Activated CD8-positive, alpha-beta memory T cell treated with anti-CD3 and anti-CD28 coated beads, Interleukin-2, amount 10 ng/mL, durations not matched to agents 7 days and 5 days (primary cell): ENCODE measurements at regions of chr9 and their contacts with region 1.

Region 1: DNA sequence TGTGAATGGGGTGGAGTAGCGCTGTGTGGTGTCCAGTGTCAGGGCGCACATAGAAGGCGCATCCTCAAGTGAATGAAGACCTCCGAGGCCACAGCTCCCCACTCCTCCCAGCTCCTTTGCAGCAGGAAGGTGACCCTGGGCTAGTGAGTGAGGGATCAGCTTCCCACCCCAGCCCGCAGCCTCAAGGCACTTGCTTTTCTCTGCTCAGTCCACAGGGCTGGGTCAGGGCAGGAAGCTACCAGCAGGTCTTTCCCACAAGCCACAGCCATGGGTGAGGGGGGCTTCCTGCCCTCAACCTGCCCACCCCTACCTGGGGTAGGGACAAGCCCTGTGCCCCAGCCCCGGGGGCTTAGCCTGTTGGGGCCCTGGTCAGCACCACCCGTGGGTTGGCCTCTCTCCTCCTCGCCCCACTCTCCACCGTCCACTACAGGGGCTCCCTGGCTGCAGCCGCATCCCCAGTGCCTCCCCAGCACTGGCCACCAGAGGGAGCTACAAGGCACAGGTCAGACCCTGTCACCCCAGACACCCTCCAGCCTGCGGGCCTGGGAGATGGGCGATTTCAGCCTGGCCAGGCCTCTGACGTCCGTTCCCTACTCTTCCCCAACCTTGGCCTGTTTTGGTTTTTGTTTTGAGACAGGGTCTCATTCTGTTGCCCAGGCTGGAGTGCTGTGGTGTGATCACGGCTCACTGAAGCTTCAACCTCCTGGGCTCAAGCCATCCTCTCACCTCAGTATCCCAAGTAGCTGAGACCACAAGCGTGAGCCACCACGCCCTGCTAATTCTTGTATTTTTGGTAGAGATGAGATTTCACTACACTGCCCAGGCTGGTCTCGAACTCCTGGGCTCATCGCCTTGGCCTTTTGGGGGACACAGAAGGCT is 1.3 kb upstream of the ABCA2 start:
- DNase-seq: peak; percentile 85
- ATAC-seq: peak; percentile 53
- H3K4me3 Mint-ChIP-seq: peak overlapping the region; percentile 65
- H3K27ac Mint-ChIP-seq: peak overlapping the region; percentile 90
- H3K4me1 Mint-ChIP-seq: peaks cover 55% of the 10 kb centered on the region
- H3K27me3 Mint-ChIP-seq: peaks cover 3% of the 10 kb centered on the region

Region 2: GRCh38 chr9:136790927-136791641 is 238.2 kb before region 1 on chr9 and contains the start of gene TMEM141:
- CTCF ChIA-PET with region 1: interaction called, 32 read pairs
- DNase-seq: peak; percentile 100
- ATAC-seq: peak; percentile 93
- H3K4me3 Mint-ChIP-seq: peak within 1 kb of the TSS; percentile 77
- H3K27ac Mint-ChIP-seq: peak within 1 kb of the TSS; percentile 86
- H3K4me1 Mint-ChIP-seq: peaks cover 30% of the 10 kb centered on the region
- H3K27me3 Mint-ChIP-seq: peaks cover 9% of the 10 kb centered on the region
- total RNA-seq, gene TMEM141: 31.7 to 32.8 TPM

Region 3: DNA sequence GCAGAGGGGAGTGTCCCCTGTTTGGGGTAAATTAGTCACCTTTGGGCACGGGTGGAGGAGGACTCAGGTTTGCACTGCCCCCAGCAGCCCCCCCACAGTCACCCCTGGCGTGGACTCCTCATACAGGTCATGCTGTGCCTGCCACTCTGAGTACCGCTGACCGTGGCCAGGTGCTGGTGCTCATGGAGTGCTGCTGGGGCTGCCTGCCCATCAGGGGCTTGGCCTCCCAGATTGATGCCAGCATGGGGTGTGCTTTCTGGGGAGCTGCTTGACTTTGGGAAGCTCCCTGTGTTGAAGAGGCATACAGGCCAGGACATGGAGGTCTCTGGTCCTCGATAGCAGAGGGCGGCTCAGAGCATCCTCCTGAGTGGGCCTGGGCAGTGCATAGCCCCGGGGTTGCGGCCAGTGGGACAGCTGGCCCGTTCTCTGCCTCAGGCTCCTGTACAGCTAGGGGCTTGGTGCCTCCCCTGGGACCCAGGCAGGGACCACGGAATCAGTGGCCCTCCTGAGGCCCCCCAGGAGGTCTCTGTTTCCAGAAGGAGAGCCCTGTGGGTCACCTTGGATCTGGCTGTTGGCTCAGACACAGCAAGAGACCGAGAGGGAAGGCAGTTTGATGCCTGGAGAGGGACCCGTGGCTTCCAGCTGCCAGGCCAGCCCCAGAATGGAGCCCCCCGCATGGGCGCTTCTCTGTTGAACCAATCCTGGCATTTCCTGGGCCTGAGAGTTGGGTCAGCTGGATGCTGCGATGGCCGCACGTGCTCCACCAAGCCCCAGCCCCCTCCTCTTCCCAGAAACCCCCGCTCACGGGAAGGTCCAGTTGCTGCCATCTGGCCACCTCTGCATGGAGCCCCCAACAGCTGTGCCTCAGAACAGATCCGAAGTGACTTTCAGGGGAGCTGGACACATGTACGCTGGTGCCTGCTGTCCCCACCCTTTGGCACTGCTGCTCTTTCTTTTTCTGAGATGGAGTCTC is 193.1 kb before region 1 on chr9:
- CTCF ChIA-PET with region 1: no interaction called
- DNase-seq: no peak
- ATAC-seq: no peak
- H3K4me3 Mint-ChIP-seq: no peak overlapping the region
- H3K27ac Mint-ChIP-seq: no peak overlapping the region
- H3K4me1 Mint-ChIP-seq: no peaks in the 10 kb centered on the region
- H3K27me3 Mint-ChIP-seq: no peaks in the 10 kb centered on the region

Region 4: GRCh38 chr9:136944519-136945279 is 84.6 kb before region 1 on chr9 and contains the starts of genes C8G and FBXW5:
- CTCF ChIA-PET with region 1: interaction called, 183 read pairs
- DNase-seq: peak; percentile 96
- ATAC-seq: peak; percentile 81
- H3K4me3 Mint-ChIP-seq: peak within 1 kb of the TSS; percentile 79
- H3K27ac Mint-ChIP-seq: peak within 1 kb of the TSS; percentile 81
- H3K4me1 Mint-ChIP-seq: peaks cover 18% of the 10 kb centered on the region
- H3K27me3 Mint-ChIP-seq: no peaks in the 10 kb centered on the region
- total RNA-seq, gene C8G: 1.7 TPM in 1 of 2 experiments, not detected in the other
- total RNA-seq, gene FBXW5: 106 to 107 TPM

Region 5: DNA sequence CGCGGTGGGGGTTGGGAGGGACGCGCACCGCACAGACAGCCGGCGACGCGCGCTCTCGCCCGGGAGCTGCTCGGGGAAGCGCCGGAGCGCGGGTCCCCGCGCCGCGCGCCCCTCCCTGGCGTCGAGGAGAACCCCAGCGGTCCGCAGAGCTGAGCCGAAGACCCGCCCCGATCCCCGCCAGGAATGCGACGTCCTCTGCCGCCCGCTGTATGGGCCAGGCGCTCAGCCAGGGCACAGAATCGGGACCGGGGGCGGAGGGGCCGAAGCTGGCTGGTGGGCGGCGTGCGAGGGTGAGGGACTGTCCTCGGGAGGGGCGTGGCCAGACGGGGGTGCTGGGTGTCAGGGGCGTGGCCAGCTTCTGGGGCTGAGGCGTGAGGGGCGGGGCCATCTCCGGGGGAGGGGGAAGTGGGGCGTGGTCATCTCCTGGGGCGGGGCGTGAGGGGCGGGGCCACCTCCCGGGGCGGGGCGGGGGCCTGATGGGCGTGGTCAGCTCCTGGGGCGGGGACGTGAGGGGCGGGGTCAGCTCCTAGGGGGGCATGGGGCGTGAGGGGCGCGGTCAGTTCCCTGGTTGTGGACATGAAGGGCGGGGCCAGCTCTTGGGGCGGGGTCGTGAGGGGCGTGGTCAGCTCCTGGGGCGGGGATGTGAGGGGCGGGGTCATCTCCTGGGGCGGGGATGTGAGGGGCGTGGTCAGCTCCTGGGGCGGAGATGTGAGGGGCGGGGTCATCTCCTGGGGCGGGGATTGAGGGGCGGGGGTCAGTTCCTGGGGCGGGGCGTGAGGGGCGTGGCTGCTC is 51.0 kb before region 1 on chr9:
- CTCF ChIA-PET with region 1: interaction called, 30 read pairs
- DNase-seq: peak; percentile 83
- ATAC-seq: peak; percentile 63
- H3K4me3 Mint-ChIP-seq: no peak overlapping the region
- H3K27ac Mint-ChIP-seq: no peak overlapping the region
- H3K4me1 Mint-ChIP-seq: peaks cover 15% of the 10 kb centered on the region
- H3K27me3 Mint-ChIP-seq: peaks cover 5% of the 10 kb centered on the region

Region 6: GRCh38 chr9:137046098-137046787 is 16.9 kb after region 1 on chr9 and contains the start of gene NPDC1:
- CTCF ChIA-PET with region 1: interaction called, 48 read pairs
- DNase-seq: peak; percentile 89
- ATAC-seq: peak; percentile 82
- H3K4me3 Mint-ChIP-seq: peak within 1 kb of the TSS; percentile 71
- H3K27ac Mint-ChIP-seq: no peak within 1 kb of the TSS
- H3K4me1 Mint-ChIP-seq: peaks cover 16% of the 10 kb centered on the region
- H3K27me3 Mint-ChIP-seq: peaks cover 43% of the 10 kb centered on the region
- total RNA-seq, gene NPDC1: 30.4 to 55.6 TPM

Region 7: DNA sequence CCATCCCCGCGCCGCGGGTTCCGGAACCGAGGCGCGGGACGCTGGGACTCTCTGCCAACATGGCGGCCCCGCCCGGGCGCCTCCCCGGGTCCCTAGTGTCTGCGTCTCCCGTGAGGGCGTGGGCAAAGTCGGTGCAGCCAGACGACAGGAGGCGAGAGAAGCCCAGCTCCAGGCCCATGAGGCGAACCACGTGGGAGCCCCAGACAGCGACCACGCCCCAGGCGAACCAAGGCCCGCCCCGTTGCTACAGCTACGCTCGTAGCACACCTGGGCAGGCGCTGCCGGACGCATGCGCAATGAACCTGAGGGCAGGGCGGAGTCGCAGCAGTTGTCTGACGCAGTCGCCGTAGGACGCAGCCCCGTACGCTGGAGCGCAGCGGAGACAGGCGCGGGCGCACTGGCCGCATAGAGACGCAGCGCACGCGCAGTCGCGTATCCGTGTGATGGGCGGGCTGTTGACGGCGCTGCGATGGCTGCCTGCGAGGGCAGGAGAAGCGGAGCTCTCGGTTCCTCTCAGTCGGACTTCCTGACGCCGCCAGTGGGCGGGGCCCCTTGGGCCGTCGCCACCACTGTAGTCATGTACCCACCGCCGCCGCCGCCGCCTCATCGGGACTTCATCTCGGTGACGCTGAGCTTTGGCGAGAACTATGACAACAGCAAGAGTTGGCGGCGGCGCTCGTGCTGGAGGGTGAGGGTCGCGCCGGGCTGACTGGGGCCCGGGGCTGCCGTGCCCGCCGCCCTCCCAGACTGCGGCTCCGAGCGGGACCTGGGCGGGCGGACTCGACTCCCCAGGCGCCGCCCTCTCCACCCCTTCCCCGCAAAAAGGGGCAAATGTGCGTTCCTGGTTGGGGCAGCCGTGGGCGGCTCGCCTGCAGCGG is 57.5 kb after region 1 on chr9 and contains the start of gene MAN1B1:
- CTCF ChIA-PET with region 1: interaction called, 12 read pairs
- DNase-seq: peak; percentile 100
- ATAC-seq: peak; percentile 86
- H3K4me3 Mint-ChIP-seq: peak within 1 kb of the TSS; percentile 82
- H3K27ac Mint-ChIP-seq: peak within 1 kb of the TSS; percentile 90
- H3K4me1 Mint-ChIP-seq: peaks cover 41% of the 10 kb centered on the region
- H3K27me3 Mint-ChIP-seq: no peaks in the 10 kb centered on the region
- total RNA-seq, gene MAN1B1: 43.8 to 60.6 TPM

Region 8: GRCh38 chr9:137105814-137106661 is 76.7 kb after region 1 on chr9:
- CTCF ChIA-PET with region 1: no interaction called
- DNase-seq: no peak
- ATAC-seq: no peak
- H3K4me3 Mint-ChIP-seq: no peak overlapping the region
- H3K27ac Mint-ChIP-seq: no peak overlapping the region
- H3K4me1 Mint-ChIP-seq: no peaks in the 10 kb centered on the region
- H3K27me3 Mint-ChIP-seq: no peaks in the 10 kb centered on the region

Region 9: GRCh38 chr9:137269231-137269772 is 240.0 kb after region 1 on chr9:
- CTCF ChIA-PET with region 1: no interaction called
- DNase-seq: no peak
- ATAC-seq: no peak
- H3K4me3 Mint-ChIP-seq: no peak overlapping the region
- H3K27ac Mint-ChIP-seq: no peak overlapping the region
- H3K4me1 Mint-ChIP-seq: peaks cover 22% of the 10 kb centered on the region
- H3K27me3 Mint-ChIP-seq: no peaks in the 10 kb centered on the region